Activated naive CD8-positive, alpha-beta T cell treated with anti-CD3 and anti-CD28 coated beads, Interleukin-2, amount 10 ng/mL, durations not matched to agents 7 days and 5 days (primary cell): ENCODE measurements at regions of chr10 and their contacts with region 1.

Region 1: DNA sequence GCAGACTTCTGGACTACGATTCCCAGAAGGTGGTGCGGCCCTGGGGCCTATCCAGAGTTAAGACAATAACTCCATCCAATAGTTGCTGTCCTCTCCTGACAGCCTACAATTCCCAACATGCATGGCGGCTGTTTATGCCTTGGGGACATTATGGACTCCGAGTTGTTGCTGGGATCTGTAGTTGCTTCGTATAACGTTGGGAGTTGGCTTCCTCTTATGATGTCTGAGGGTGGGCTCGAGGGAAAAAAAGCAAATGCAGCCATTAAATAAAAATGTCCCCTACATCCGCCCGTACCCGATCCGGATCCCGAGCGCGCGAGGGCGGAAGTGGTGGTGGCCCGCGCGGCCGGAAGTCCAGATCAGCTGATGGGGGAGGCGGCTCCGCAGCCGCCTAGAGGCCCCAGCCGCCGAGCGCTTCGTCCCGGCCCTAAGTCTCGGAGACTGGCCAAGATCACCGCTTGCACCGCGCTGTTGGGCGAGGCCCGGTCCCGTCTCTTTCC is at the start of gene ZSWIM8:
- DNase-seq: peak; percentile 86
- ATAC-seq: peak; percentile 82
- H3K4me3 Mint-ChIP-seq: peak within 1 kb of the TSS; percentile 95
- H3K27ac Mint-ChIP-seq: peak within 1 kb of the TSS; percentile 92
- H3K4me1 Mint-ChIP-seq: peaks cover 36% of the 10 kb centered on the region
- H3K27me3 Mint-ChIP-seq: no peaks in the 10 kb centered on the region
- total RNA-seq, gene ZSWIM8: 93.4 to 95.2 TPM

Region 2: DNA sequence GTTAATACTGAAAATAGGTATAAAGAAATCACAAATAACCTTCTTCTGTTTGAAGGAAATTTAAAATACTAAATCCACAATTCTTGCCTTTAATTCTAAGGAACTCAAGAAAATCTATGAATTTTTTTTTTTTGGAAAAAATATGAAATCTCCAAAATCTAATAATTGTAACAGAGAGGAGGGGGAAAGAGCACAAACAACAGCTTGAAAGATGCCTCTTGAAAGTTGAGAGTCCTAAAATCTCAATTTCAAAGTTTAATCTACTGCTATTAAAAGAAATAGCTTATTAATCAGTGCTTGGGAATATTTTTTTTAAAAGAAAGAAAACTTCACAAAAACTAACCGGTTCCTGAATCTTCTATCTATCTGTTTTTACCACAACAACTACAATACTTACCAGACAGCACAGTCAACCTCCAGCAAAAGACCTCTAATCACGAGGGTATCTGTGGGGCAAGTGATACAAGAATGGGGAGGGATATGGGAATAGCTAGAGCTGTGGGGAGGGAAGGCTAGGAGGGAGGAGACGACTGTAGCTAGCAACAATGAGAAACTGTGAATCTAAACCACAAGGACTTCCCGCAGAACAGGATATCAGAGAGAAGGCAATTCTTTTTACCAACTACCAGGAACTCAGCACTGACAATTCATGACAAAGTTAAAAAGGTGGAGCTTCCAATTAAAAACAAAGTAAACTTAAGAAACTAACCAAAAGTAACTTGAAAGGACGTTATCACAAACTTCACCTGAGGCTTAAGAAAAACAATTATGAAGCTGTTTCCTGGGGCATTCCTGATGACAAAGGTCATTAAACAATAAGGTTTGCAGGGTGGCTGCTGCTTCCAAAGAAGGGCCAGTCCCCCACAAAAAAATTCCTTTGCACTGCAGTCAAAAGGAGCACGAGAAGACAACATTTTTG is 194.1 kb before region 1 on chr10 and contains the start of gene USP54:
- POLR2A ChIA-PET with region 1: no interaction called
- DNase-seq: no peak
- ATAC-seq: peak; percentile 74
- H3K4me3 Mint-ChIP-seq: peak within 1 kb of the TSS; percentile 61
- H3K27ac Mint-ChIP-seq: peak within 1 kb of the TSS; percentile 66
- H3K4me1 Mint-ChIP-seq: peaks cover 13% of the 10 kb centered on the region
- H3K27me3 Mint-ChIP-seq: no peaks in the 10 kb centered on the region
- total RNA-seq, gene USP54: 3.4 to 4.1 TPM

Region 3: GRCh38 chr10:73601486-73601921 is 183.8 kb before region 1 on chr10:
- POLR2A ChIA-PET with region 1: no interaction called
- DNase-seq: no peak
- ATAC-seq: no peak
- H3K4me3 Mint-ChIP-seq: no peak overlapping the region
- H3K27ac Mint-ChIP-seq: no peak overlapping the region
- H3K4me1 Mint-ChIP-seq: peaks cover 4% of the 10 kb centered on the region
- H3K27me3 Mint-ChIP-seq: no peaks in the 10 kb centered on the region

Region 4: DNA sequence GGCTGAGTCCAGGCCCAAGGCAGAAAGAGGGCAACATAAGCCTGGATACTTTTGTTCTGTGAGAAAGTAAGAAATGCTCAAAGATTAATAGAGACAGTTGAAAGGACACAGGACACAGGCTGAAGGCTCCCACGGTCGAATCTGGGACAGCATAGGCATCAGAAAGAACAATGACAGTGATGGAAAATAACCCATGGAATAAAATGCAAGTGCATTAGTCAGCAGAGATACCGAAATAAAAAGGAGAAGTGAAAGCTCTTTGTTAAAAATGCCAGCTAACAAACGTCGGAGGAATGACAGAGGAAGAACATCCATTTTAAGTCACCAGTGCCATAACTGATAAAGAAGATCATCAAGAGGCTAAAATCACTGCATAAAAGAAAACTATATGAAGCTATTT is 67.7 kb before region 1 on chr10:
- POLR2A ChIA-PET with region 1: no interaction called
- DNase-seq: no peak
- ATAC-seq: no peak
- H3K4me3 Mint-ChIP-seq: no peak overlapping the region
- H3K27ac Mint-ChIP-seq: no peak overlapping the region
- H3K4me1 Mint-ChIP-seq: peaks cover 4% of the 10 kb centered on the region
- H3K27me3 Mint-ChIP-seq: no peaks in the 10 kb centered on the region

Region 5: GRCh38 chr10:73798927-73799563 is 13.8 kb after region 1 on chr10:
- POLR2A ChIA-PET with region 1: interaction called, 19 read pairs
- DNase-seq: no peak
- ATAC-seq: peak; percentile 13
- H3K4me3 Mint-ChIP-seq: no peak overlapping the region
- H3K27ac Mint-ChIP-seq: no peak overlapping the region
- H3K4me1 Mint-ChIP-seq: peaks cover 10% of the 10 kb centered on the region
- H3K27me3 Mint-ChIP-seq: no peaks in the 10 kb centered on the region

Region 6: GRCh38 chr10:73810735-73811465 is 25.6 kb after region 1 on chr10:
- POLR2A ChIA-PET with region 1: interaction called, 25 read pairs
- DNase-seq: peak; percentile 82
- ATAC-seq: peak; percentile 28
- H3K4me3 Mint-ChIP-seq: peak overlapping the region; percentile 96
- H3K27ac Mint-ChIP-seq: peak overlapping the region; percentile 95
- H3K4me1 Mint-ChIP-seq: peaks cover 32% of the 10 kb centered on the region
- H3K27me3 Mint-ChIP-seq: no peaks in the 10 kb centered on the region

Region 7: DNA sequence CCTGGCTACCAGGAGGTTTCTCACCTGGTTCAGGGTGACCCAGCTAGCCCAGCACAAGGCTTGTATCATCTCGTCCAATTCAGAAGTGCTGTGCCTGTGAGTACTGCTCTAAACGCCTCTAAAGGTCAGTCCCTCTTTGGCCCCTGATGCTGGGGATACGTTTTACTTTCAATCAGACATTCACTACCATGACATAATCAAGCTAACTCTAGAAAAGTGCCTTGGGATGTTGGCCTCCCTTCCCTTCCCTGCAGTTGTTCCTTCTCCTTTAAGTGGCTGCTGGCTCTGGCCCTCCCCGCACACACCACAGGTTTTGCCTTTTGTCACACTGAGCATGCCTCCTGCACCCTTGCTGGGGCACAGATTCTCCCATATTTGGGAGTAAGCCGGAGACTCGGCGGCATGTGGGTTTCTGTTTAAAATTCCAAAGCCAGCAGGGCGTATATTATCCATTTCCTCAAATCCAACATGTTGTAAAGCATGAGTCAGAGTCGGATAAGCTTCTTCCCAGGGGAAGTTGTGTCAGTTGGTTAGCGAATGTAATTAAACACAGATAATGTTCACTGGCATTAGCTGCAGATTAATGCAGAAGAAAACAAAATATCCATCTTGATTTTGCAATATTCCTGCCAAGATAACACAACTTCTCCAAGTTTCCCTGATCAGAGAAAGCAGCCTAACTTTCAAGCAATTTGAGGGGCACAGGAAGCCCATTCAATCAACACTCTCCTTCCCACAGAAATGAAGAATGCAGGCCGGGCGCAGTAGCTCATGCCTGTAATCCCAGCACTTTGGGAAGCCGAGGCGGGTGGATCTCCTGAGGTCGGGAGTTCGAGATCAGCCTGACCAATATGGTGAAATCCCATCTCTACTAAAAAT is 180.9 kb after region 1 on chr10:
- POLR2A ChIA-PET with region 1: no interaction called
- DNase-seq: no peak
- ATAC-seq: no peak
- H3K4me3 Mint-ChIP-seq: no peak overlapping the region
- H3K27ac Mint-ChIP-seq: no peak overlapping the region
- H3K4me1 Mint-ChIP-seq: no peaks in the 10 kb centered on the region
- H3K27me3 Mint-ChIP-seq: peaks cover 16% of the 10 kb centered on the region